ENCODE measurements at regions of chr4 and their contacts with region 1.

Region 1: DNA sequence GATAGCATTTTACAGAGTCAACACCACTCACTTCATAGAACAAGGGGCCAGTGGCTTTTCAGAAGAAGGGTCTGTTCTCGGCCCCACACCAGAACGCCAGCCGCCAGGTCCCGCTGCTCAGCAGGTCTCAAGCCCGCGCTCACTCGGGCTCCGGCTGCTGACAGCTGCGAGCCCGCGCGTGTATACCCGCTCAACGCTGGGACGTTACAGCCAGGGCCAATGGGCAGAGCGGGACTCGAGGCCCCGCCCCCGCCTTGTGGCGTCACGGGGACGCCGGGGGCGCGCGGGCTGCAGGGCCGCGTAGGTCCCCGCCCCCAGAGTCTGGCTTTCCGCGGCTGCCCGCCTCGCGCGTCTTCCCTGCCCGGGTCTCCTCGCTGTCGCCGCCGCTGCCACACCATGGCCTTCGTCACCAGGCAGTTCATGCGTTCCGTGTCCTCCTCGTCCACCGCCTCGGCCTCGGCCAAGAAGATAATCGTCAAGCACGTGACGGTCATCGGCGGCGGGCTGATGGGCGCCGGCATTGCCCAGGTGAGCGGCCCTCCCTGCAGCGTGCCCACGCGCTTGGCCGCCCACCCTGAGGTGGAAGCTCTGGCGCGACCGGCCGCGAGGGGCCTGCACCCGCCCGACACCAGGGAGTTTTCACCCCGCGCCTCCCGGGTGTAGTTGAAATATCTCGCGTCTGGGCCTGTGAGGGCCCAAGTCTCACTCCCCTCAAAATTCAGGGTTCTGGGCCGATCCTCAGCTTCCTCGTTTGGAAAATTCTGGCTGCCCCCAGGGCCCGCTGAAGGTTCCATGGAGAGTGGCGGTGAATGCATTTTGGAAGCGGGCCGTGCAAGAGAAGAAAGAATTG is at the start of gene HADH:
- DNase-seq: peak; percentile 97
- ATAC-seq: peak; percentile 98
- H3K4me3 Mint-ChIP-seq: peak within 1 kb of the TSS; percentile 94
- H3K27ac Mint-ChIP-seq: peak within 1 kb of the TSS; percentile 89
- H3K4me1 Mint-ChIP-seq: peaks cover 46% of the 10 kb centered on the region
- H3K27me3 Mint-ChIP-seq: no peaks in the 10 kb centered on the region
- CTCF ChIP-seq: no peak
- total RNA-seq, gene HADH: 21.2 and 22.8 TPM in 2 replicates

Region 2: GRCh38 chr4:106315968-106316772 is 1673.6 kb before region 1 on chr4 and contains the starts of genes AIMP1 and TBCK:
- CTCF ChIA-PET with region 1: no interaction called
- POLR2A ChIA-PET with region 1: no interaction called
- intact Hi-C with region 1: loop called (anchors 5 kb)
- DNase-seq: peak; percentile 78
- ATAC-seq: peak; percentile 90
- H3K4me3 Mint-ChIP-seq: no peak within 1 kb of the TSS
- H3K27ac Mint-ChIP-seq: no peak within 1 kb of the TSS
- H3K4me1 Mint-ChIP-seq: peaks cover 35% of the 10 kb centered on the region
- H3K27me3 Mint-ChIP-seq: no peaks in the 10 kb centered on the region
- CTCF ChIP-seq: no peak
- total RNA-seq, gene AIMP1: 49.4 and 53.5 TPM in 2 replicates
- total RNA-seq, gene TBCK: 45.6 and 60.1 TPM in 2 replicates

Region 3: GRCh38 chr4:107913281-107913899 is 76.4 kb before region 1 on chr4:
- CTCF ChIA-PET with region 1: no interaction called
- POLR2A ChIA-PET with region 1: no interaction called
- intact Hi-C with region 1: loop called (anchors 1 kb)
- DNase-seq: no peak
- ATAC-seq: peak; percentile 75
- H3K4me3 Mint-ChIP-seq: no peak overlapping the region
- H3K27ac Mint-ChIP-seq: no peak overlapping the region
- H3K4me1 Mint-ChIP-seq: peaks cover 2% of the 10 kb centered on the region
- H3K27me3 Mint-ChIP-seq: peaks cover 1% of the 10 kb centered on the region
- CTCF ChIP-seq: peak; percentile 45

Region 4: GRCh38 chr4:107937040-107937785 is 52.5 kb before region 1 on chr4:
- CTCF ChIA-PET with region 1: no interaction called
- POLR2A ChIA-PET with region 1: no interaction called
- intact Hi-C with region 1: loop called (anchors 1 kb)
- DNase-seq: no peak
- ATAC-seq: peak; percentile 45
- H3K4me3 Mint-ChIP-seq: peak overlapping the region; percentile 45
- H3K27ac Mint-ChIP-seq: peak overlapping the region; percentile 79
- H3K4me1 Mint-ChIP-seq: peaks cover 47% of the 10 kb centered on the region
- H3K27me3 Mint-ChIP-seq: no peaks in the 10 kb centered on the region
- CTCF ChIP-seq: no peak

Region 5: DNA sequence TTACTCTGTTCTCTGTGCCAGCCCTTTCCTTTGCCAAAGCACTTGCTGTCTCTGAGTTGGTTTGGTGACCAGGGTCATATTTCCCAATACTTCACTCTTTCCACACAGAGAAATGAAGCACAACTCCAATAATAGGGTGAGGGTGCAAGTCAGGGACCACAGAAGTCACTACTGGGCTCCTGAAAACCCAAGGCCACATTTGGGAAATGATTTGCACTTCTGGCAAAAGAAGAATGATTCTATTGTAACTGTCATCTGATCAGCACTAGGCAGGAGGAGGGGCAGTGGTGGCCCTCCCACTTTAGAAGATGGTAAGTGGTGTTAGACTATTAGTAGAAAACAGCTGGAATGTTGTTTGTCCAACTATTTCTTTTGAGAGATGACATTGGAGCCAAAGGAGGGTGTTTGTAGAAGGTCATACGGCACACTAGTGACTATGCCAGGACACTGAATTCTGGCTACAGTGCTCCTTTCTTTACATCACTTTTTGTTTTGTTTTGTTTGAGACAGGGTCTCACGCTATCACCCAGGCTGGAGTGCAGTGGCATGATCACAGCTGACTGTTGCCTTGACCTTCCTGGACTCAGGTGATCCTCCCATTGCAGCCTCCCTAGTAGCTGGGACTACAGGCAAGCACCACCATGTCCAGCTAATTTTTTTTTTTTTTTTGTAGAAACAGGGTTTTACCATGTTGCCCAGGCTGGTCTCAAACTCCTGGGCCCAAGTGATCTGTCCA is 10.9 kb before region 1 on chr4:
- CTCF ChIA-PET with region 1: no interaction called
- POLR2A ChIA-PET with region 1: no interaction called
- intact Hi-C with region 1: no loop called
- DNase-seq: no peak
- ATAC-seq: no peak
- H3K4me3 Mint-ChIP-seq: no peak overlapping the region
- H3K27ac Mint-ChIP-seq: no peak overlapping the region
- H3K4me1 Mint-ChIP-seq: no peaks in the 10 kb centered on the region
- H3K27me3 Mint-ChIP-seq: no peaks in the 10 kb centered on the region
- CTCF ChIP-seq: no peak

Region 6: GRCh38 chr4:108172753-108173598 is 183.2 kb after region 1 on chr4:
- CTCF ChIA-PET with region 1: no interaction called
- POLR2A ChIA-PET with region 1: no interaction called
- intact Hi-C with region 1: loop called (anchors 2 kb)
- DNase-seq: peak; percentile 26
- ATAC-seq: peak; percentile 63
- H3K4me3 Mint-ChIP-seq: peak overlapping the region; percentile 82
- H3K27ac Mint-ChIP-seq: no peak overlapping the region
- H3K4me1 Mint-ChIP-seq: peaks cover 42% of the 10 kb centered on the region
- H3K27me3 Mint-ChIP-seq: peaks cover 52% of the 10 kb centered on the region
- CTCF ChIP-seq: no peak

Region 7: DNA sequence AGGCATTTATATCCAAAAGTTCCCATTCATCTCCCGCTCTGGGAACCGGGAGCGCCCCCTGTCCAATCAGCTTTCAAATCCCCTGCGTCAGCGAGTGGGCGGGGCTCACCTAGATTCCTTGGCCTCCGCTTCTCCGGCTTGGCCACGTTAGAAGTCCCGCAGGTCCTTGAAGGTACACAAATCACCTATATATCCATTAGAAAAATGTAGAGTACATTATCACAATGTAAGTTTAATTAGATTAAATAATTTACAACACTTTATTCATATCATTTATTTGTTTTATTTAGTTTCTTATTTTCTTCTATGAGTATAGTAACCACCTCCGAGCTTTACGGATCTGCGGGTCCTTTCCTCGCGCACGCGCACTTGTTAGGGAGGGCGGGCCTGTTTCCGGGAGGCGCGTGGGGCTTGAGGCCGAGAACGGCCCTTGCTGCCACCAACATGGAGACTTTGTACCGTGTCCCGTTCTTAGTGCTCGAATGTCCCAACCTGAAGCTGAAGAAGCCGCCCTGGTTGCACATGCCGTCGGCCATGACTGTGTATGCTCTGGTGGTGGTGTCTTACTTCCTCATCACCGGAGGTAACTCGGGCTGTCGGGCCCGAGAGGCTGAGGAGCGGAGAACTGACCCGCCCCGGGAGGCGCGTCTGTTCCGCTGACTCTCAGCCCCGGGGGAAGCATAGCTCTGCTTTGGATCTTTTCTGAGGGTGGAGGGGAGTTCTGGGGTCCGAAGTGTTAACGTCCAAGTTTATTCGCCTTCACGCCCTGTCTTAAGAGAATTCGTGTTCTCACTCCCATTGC is 660.7 kb after region 1 on chr4 and contains the start of gene OSTC:
- CTCF ChIA-PET with region 1: no interaction called
- POLR2A ChIA-PET with region 1: no interaction called
- intact Hi-C with region 1: loop called (anchors 1 kb)
- DNase-seq: peak; percentile 87
- ATAC-seq: peak; percentile 93
- H3K4me3 Mint-ChIP-seq: peak within 1 kb of the TSS; percentile 97
- H3K27ac Mint-ChIP-seq: peak within 1 kb of the TSS; percentile 97
- H3K4me1 Mint-ChIP-seq: peaks cover 38% of the 10 kb centered on the region
- H3K27me3 Mint-ChIP-seq: no peaks in the 10 kb centered on the region
- CTCF ChIP-seq: no peak
- total RNA-seq, gene OSTC: 56.7 and 60.1 TPM in 2 replicates

Region 8: DNA sequence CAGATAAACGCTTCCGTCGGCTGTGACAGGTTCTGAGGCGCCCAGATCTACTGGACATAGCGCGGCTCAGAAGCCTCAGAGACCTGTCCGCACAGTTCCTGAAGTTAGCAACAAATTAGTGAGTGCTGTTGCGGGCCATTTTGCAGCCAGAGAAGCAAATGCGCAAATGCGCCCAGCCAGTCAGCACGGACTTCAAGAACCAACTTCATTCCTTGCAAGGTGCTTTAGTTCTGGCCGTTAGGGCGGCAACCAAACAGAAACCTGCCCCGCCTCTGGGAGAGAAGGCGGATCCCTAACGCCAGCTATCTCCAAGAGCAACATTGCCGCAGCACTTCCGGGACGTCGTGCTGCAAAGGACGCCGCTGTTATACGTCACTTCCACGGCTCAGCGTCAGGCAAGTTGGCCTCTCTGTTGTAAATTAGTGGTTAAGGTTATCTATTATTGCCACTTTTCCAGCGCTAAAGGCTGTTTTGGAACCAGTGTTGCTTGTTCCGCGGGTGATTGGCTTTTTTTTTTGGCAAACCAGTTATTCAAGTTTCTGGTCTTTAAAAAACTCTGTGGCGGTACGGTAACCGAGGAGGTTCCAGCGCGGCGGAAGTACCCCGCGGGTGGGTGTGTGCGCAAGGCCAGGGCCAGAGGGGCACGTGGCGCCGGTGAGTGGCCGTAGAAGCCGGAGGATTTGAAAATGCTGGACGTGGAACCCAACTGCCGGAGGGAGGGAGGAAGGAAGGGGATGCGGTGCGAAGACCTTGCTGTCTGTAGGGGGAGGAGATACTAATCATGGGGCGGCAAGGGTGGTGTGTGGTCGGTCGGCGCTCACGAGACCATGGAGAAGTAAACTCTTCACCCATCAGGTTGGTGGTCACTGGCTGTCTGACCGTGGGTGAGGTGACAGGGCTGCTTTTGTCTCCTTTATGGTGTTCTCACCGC is 1825.7 kb after region 1 on chr4 and contains the start of gene GAR1:
- CTCF ChIA-PET with region 1: no interaction called
- POLR2A ChIA-PET with region 1: no interaction called
- intact Hi-C with region 1: loop called (anchors 1 kb)
- DNase-seq: peak; percentile 70
- ATAC-seq: peak; percentile 97
- H3K4me3 Mint-ChIP-seq: peak within 1 kb of the TSS; percentile 94
- H3K27ac Mint-ChIP-seq: peak within 1 kb of the TSS; percentile 93
- H3K4me1 Mint-ChIP-seq: peaks cover 28% of the 10 kb centered on the region
- H3K27me3 Mint-ChIP-seq: no peaks in the 10 kb centered on the region
- CTCF ChIP-seq: no peak
- total RNA-seq, gene GAR1: 21.0 and 23.1 TPM in 2 replicates

Measured in activated B cell treated with CpG ODN at 0.5 μM for 24 hours (primary cell).